AG04450 (cell line): ENCODE measurements at regions of chr5 and their contacts with region 1.

Region 1: GRCh38 chr5:36177715-36178523 is 26.0 kb downstream of the SKP2 start:
- DNase-seq: peak; percentile 15
- H3K4me3 ChIP-seq: no peak overlapping the region
- H3K27ac ChIP-seq: no peak overlapping the region
- H3K27me3 ChIP-seq: no peaks in the 10 kb centered on the region
- CTCF ChIP-seq: peak; percentile 68

Region 2: DNA sequence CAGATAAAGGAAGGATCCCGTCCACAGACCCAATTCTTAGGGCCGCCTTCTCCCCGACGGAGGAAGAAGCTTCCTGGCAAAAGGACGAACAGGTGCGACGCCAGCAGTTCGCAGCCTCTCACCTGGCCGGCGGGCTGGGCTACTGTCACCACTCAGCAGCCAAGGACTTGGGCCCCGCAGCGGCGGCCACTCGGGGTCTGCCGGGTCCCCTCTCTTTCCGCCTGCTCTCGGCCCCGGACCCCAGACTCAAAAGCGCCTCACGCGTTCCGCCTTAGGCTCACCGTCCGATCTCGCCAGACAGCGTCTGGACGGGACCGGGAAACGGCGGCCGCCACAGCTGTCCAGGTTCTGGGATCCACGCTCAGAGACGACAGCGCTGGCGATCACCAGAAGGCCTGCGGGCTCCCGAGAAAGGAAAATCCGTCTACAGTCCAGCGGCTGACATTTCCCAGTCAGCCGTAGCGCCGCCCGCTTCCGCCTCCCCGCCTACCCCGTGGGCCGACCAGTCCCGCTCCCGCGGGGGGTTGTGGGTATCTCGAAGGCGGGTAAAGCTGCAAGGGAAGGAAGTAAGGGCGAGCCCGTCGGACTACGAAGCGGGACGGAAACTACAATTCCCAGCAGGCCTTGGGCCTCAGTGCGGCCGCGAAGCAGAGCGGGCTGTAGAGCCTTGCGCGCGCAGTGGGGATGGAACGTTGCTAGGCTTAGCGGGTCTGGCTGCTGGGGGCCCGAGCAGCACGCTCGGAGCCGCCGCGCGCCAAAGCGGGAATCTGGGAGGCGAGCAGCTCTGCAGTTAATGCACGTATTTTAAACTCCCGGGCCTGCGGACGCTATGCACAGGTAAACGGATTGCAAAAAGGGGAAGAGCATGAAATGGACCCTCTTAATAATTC is 26.2 kb before region 1 on chr5 and contains the starts of genes LMBRD2 and SKP2:
- CTCF ChIA-PET with region 1: interaction called, 15 read pairs
- POLR2A ChIA-PET with region 1: interaction called, 3 read pairs
- DNase-seq: peak; percentile 94
- H3K4me3 ChIP-seq: peak within 1 kb of the TSS; percentile 84
- H3K27ac ChIP-seq: no peak within 1 kb of the TSS
- H3K27me3 ChIP-seq: no peaks in the 10 kb centered on the region
- CTCF ChIP-seq: no peak
- polyA plus RNA-seq, gene LMBRD2: 4.1 and 5.3 TPM in 2 replicates
- polyA plus RNA-seq, gene SKP2: 21.6 and 24.6 TPM in 2 replicates

Region 3: GRCh38 chr5:36162810-36163486 is 15.0 kb before region 1 on chr5:
- CTCF ChIA-PET with region 1: interaction called, 25 read pairs
- POLR2A ChIA-PET with region 1: no interaction called
- DNase-seq: no peak
- H3K4me3 ChIP-seq: no peak overlapping the region
- H3K27ac ChIP-seq: no peak overlapping the region
- H3K27me3 ChIP-seq: no peaks in the 10 kb centered on the region
- CTCF ChIP-seq: no peak

Region 4: GRCh38 chr5:36200513-36200912 is 22.6 kb after region 1 on chr5:
- CTCF ChIA-PET with region 1: interaction called, 17 read pairs
- POLR2A ChIA-PET with region 1: no interaction called
- DNase-seq: no peak
- H3K4me3 ChIP-seq: no peak overlapping the region
- H3K27ac ChIP-seq: no peak overlapping the region
- H3K27me3 ChIP-seq: no peaks in the 10 kb centered on the region
- CTCF ChIP-seq: no peak

Region 5: DNA sequence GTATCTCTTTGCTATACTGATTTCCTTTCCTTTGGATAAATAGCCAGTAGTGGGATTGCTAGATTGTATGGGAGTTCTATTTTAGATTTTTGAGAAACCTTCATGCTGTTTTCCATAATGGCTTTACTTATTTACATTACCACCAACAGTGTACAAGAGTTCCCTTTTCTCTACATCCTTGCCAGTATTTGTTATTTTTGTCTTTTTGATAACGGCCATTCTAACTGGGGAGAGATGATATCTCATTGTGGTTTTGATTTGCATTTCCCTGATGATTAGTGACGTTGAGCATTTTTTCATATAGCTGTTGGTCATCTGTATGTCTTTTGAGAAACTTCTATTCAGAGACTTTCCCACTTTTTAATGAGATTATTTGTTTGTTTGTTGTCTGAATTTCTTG is 38.0 kb after region 1 on chr5:
- CTCF ChIA-PET with region 1: interaction called, 11 read pairs
- POLR2A ChIA-PET with region 1: no interaction called
- DNase-seq: no peak
- H3K4me3 ChIP-seq: no peak overlapping the region
- H3K27ac ChIP-seq: no peak overlapping the region
- H3K27me3 ChIP-seq: no peaks in the 10 kb centered on the region
- CTCF ChIP-seq: no peak

Region 6: DNA sequence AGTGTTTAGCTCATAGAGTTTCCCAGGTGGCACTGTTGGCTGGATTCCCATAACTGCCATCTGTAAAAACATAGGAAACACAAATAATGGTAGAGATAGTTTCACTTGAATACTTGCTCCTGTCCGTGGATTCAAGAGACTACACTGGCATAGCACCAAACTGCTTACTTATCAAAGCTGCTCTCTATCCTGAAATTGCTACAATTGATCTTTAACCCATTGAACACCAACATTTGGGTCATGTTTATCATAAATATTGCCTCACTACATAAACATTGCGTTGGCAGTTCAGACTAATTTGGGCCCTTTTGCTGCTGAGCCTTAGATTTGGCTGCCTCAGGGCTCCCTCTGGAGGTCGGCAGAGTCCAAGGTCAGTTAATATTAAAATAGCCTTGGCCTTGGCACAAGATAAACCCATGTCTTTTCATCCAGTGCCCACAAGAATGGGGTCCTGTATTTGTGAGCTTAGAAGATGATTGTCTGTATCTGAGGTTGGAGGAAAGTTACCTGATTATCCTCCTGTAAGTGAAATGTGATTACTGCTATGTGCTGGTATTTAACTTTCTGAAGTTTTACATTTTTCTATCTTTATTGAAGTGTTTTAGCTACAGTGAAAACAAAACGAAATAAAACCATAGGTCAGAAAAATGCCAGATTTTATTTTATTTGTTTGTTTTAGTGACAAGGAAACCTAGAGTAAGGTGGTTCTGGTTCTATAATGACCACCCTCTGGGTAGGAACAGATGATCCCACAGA is 127.8 kb after region 1 on chr5:
- CTCF ChIA-PET with region 1: interaction called, 88 read pairs
- POLR2A ChIA-PET with region 1: no interaction called
- DNase-seq: no peak
- H3K4me3 ChIP-seq: no peak overlapping the region
- H3K27ac ChIP-seq: no peak overlapping the region
- H3K27me3 ChIP-seq: no peaks in the 10 kb centered on the region
- CTCF ChIP-seq: peak; percentile 85

Region 7: GRCh38 chr5:36695677-36696673 is 518.1 kb after region 1 on chr5:
- CTCF ChIA-PET with region 1: interaction called, 24 read pairs
- POLR2A ChIA-PET with region 1: no interaction called
- DNase-seq: peak; percentile 21
- H3K4me3 ChIP-seq: no peak overlapping the region
- H3K27ac ChIP-seq: no peak overlapping the region
- H3K27me3 ChIP-seq: peaks cover 7% of the 10 kb centered on the region
- CTCF ChIP-seq: peak; percentile 85

Region 8: GRCh38 chr5:36957953-36958559 is 780.1 kb after region 1 on chr5:
- CTCF ChIA-PET with region 1: no interaction called
- POLR2A ChIA-PET with region 1: no interaction called
- DNase-seq: no peak
- H3K4me3 ChIP-seq: no peak overlapping the region
- H3K27ac ChIP-seq: no peak overlapping the region
- H3K27me3 ChIP-seq: no peaks in the 10 kb centered on the region
- CTCF ChIP-seq: no peak